Psoas muscle (tissue), 8 donors: ENCODE measurements at regions of chr2 and their contacts with region 1.

Region 1: DNA sequence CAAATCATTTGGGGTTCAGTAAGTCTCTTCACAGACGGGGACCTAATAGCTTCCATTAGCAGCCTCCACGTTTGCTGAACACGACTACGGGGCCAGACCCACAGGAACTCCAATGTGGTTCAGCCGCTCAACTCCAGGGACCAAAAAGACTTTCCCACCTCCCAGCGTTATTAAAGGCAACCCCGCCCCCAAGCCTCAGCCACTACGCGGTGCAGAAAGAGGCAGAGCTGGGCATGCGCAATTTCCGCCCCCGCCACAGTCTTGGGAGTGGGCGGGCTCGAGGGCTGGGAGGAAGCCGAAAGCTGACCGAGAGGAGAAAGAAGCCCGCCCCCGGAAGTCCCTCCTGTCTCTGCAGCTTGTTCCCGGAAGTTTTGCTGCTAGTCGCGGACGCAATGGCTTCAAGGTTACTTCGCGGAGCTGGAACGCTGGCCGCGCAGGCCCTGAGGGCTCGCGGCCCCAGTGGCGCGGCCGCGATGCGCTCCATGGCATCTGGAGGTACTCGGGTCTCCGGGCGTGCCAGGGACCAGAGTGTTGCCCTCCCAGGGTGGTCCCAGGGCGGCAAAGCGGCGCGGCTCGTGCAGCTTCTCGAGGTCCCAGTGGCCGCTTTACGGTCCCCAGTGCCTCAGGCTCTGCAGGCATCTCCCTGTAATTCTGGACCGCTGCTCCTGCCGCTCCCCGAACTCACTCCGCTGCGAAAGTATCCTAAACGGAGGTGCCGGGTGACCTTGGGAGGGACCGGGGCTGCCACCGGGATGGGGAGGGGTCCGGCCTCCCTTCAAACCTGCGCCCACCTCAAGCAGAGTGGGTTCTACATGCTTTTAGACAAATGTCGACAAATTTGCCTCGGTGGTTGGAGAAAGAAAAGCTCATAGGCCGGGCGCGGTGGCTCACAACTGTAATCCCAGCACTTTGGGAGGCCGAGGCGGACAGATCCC is at the start of gene COX5B:
- DNase-seq: peak; percentile 99 to 100
- ATAC-seq: peak; percentile 99
- H3K4me3 ChIP-seq: peak within 1 kb of the TSS; percentile 98
- H3K27ac ChIP-seq: peak within 1 kb of the TSS; percentile 94
- H3K4me1 ChIP-seq: peaks cover 7% of the 10 kb centered on the region
- H3K27me3 ChIP-seq: no peaks in the 10 kb centered on the region
- CTCF ChIP-seq: no peak
- total RNA-seq, gene COX5B: 635 to 891 (median 731) TPM

Region 2: DNA sequence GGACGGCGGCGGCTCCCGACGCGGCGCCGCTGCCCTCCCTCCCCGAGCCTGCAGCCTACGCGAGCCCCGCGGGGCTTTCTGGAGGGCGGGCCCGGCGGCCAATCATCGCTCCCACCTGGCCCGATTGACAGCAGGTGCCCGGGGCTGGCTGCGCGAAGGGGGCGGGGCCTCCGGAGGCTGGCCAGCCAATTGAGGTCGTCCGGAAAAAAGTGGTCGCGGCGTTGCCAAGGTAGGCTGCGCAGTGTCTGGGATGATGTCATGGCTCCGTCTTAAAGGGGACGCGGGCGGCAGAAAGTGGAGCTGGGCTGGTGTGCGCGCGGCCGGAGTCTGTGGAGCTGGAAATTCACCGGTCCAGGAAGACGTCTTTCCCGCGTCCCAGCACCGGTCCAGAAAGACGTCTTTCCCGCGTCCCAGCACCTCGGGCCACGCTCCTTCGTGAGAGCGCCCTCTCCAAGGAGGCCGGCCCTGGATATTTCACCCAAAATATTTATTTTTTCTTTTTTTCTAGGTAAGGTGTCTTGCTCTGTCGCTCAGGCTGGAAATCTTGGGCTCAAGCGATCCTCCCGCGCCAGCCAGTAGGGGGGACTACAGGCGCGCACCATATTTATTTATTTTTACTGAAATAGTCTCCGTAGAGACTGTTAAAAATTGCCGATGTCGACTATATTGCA is 18.1 kb after region 1 on chr2 and contains the start of gene ACTR1B:
- intact Hi-C with region 1: loop called (anchors 1 kb)
- DNase-seq: peak; percentile 97 to 99
- ATAC-seq: peak; percentile 94 to 96 (median 95)
- H3K4me3 ChIP-seq: peak within 1 kb of the TSS; percentile 84
- H3K27ac ChIP-seq: peak within 1 kb of the TSS; percentile 98
- H3K4me1 ChIP-seq: peaks cover 24% of the 10 kb centered on the region
- H3K27me3 ChIP-seq: no peaks in the 10 kb centered on the region
- CTCF ChIP-seq: peak; percentile 58
- total RNA-seq, gene ACTR1B: 46.1 to 65.4 (median 55.5) TPM

Region 3: DNA sequence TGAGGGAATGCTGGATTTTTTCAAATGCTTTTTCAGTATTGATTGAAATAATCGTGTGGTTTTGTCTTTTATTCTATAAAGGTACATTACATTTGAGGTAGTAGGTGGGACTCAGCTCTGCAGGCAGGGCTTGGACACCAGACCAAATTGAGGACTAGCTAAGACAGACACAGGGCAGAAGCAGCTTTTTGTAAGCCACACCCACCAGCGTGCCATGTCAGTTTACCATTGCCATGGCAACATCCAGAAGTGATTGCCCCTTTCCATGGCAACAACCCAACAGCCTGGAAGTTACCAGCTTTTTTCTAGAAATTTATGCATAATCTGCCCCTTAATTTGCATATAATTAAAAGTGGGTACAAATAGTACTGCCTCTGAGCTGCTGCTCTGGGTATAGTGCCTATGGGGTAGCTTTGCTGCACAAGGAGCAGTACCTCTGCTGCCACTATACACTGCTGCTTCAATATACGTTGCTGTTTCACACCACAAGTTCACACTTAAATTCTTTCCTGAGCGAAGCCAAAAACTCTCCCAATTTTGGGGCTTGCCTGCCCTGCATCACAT is 417.4 kb after region 1 on chr2:
- intact Hi-C with region 1: loop called in 1 of 2 experiments (anchors 5 kb)
- DNase-seq: no peak
- ATAC-seq: no peak
- H3K4me3 ChIP-seq: no peak overlapping the region
- H3K27ac ChIP-seq: no peak overlapping the region
- H3K4me1 ChIP-seq: no peaks in the 10 kb centered on the region
- H3K27me3 ChIP-seq: no peaks in the 10 kb centered on the region
- CTCF ChIP-seq: no peak